Activated T-helper 1 cell treated with anti-CD3 and anti-CD28 coated beads, Interleukin-12 subunit alpha, Interleukin-12 subunit beta, Interleukin-2, Interleukin-4 antibody, amounts not matched to agents 30 ng/mL and 10 ng/mL and 1 ng/mL, durations not matched to agents 14 hours and 24 hours and 36 hours (primary cell): ENCODE measurements at regions of chr19 and their contacts with region 1.

Region 1: GRCh38 chr19:43619262-43620060 is at the start of gene ZNF428:
- DNase-seq: peak; percentile 86
- H3K4me3 Mint-ChIP-seq: peak within 1 kb of the TSS; percentile 98
- H3K27ac Mint-ChIP-seq: peak within 1 kb of the TSS; percentile 99
- H3K4me1 Mint-ChIP-seq: peaks cover 23% of the 10 kb centered on the region
- H3K27me3 Mint-ChIP-seq: no peaks in the 10 kb centered on the region
- total RNA-seq, gene ZNF428: 17.9 and 20.3 TPM in 2 replicates

Region 2: DNA sequence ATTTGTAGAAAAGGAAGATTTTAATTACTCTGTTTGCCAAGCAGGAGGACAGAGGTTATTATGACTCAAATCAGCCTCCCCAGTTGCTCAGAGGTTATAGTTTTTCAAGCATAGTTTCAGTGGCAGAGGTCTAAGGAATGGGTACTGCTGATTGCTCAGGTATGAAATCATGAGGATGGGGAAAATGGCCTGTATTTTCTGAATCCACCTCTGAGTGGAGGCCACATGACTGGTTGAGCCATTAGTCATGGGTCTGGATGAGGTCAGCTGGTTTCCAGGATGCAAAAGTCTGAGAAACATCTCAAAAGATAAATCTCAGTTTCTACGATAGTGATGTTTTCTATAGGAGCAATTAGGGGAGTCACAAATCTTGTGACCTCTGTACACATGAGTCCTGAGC is 961.9 kb before region 1 on chr19:
- intact Hi-C with region 1: no loop called
- DNase-seq: no peak
- H3K4me3 Mint-ChIP-seq: no peak overlapping the region
- H3K27ac Mint-ChIP-seq: no peak overlapping the region
- H3K4me1 Mint-ChIP-seq: no peaks in the 10 kb centered on the region
- H3K27me3 Mint-ChIP-seq: peaks cover 5% of the 10 kb centered on the region

Region 3: DNA sequence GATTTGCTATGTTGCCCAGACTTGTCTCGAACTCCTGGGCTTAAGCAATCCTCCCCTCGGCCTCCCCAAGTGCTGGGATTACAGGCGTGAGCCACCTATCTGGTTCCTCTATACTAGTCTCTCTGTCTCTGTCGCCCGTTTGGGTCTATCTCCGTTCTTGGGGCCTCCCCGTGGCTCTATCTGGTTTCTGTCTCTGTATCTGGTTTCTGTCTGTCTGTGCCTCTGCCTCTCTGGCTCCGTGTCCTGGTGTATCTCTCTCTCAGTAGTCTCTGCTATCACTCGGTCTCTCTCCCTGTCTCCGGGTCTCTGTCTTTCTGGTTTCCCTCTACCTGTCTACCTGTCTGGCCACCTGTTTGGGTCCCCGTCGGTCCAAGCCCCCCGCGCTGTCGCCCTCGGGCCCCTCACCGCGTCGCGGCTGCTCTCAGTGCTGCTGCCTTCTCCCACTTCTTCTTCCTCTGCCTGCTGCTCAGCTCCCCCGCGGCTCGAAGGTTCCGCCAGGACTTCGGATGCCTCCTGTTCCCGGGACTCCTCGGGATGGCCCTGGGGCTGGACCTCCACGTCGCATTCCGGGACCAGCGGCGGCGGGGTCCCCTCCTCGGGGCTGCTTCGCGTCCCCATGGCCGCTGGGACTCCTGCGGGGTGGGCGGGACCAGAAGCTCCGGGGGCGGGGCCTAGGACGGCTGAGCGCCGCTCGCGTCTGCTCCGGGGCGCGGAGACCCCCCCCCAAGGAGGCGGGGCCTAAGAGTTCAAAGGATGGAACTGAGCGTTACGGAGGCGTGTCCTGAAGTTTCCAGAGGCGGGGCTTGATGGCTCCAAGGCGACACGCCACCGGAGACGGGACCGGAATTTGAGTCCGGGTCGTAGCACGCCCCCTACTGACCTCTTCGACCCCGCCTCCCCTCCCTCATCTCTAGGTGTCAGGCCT is 115.7 kb before region 1 on chr19:
- intact Hi-C with region 1: loop called (anchors 1 kb)
- DNase-seq: peak; percentile 98
- H3K4me3 Mint-ChIP-seq: peak overlapping the region; percentile 88
- H3K27ac Mint-ChIP-seq: peak overlapping the region; percentile 82
- H3K4me1 Mint-ChIP-seq: peaks cover 18% of the 10 kb centered on the region
- H3K27me3 Mint-ChIP-seq: no peaks in the 10 kb centered on the region

Region 4: DNA sequence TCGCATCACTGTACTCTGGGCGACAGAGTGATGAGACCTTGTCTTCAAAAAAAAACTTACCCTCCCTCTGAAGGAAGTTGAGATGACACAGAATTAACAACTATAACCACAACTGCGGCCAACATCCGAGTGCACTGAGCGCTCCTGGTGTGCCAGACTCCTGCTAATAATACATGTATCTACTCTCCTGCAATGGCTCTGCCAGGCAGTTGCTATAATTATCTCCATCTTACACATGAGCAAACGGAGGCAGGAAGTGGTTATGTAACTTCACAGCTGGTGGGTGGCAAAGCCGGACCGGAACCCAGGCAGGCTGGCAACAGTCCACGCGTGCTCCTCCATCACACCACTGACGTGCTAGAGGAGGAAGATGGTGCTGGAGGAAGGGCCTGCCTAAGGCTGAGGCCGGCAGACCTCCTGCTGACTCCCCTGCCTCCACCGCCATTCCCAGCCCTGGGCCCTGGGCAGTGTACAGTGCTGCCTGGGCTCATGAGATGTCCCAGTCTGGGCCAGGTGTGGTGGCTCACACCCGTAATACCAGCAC is 56.7 kb before region 1 on chr19:
- intact Hi-C with region 1: loop called (anchors 1 kb)
- DNase-seq: peak; percentile 54
- H3K4me3 Mint-ChIP-seq: peak overlapping the region; percentile 37
- H3K27ac Mint-ChIP-seq: peak overlapping the region; percentile 74
- H3K4me1 Mint-ChIP-seq: peaks cover 32% of the 10 kb centered on the region
- H3K27me3 Mint-ChIP-seq: no peaks in the 10 kb centered on the region

Region 5: DNA sequence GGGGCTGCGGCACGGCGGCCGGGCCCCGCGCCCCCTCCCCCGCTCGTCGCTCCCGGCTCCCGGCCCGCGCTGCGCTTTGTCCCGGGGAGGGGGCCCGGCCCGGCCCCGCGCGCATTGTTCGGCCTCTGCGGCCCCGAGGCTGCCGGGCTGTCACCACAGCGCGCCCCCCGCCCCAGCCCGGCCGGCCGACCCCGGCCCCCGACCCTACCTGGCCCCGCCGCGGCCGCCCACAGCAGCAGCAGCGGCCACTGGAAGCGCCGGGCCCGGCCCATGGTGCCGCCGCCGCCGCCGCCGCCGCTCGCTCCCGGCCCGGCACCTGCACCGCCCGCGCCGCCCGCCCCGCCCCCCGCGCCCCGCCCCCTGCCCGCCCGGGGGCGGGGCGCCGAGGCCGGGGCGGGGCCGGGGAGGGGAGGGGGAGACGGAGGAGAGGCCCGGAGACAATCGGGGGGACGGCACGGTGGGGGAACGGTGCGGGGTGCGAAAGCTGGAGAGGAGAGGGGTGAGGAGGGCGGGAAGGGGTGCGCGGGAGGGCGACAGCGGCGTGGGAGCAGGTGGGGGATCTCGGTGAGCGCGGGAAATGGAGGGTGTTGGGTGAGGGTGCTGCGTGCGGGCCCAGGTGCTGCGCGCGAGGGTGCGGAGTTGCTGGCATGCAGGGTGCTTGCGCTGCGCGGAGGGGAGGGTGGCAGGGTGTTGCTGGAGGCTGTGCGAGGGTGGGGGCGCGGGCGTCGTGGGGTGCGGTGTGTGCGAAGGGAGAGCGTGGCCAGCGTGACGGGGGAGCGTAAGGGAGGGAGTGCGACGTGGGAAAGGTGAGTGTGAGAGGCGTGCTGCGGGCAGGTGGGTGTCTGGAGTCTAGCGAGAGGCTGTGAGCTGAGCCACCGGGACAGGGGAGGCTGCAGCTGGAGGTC is 20.3 kb after region 1 on chr19 and contains the start of gene CADM4:
- intact Hi-C with region 1: loop called (anchors 1 kb)
- DNase-seq: peak; percentile 30
- H3K4me3 Mint-ChIP-seq: peak within 1 kb of the TSS; percentile 80
- H3K27ac Mint-ChIP-seq: peak within 1 kb of the TSS; percentile 46
- H3K4me1 Mint-ChIP-seq: no peaks in the 10 kb centered on the region
- H3K27me3 Mint-ChIP-seq: peaks cover 41% of the 10 kb centered on the region
- total RNA-seq, gene CADM4: 0.32 and 0.39 TPM in 2 replicates

Region 6: DNA sequence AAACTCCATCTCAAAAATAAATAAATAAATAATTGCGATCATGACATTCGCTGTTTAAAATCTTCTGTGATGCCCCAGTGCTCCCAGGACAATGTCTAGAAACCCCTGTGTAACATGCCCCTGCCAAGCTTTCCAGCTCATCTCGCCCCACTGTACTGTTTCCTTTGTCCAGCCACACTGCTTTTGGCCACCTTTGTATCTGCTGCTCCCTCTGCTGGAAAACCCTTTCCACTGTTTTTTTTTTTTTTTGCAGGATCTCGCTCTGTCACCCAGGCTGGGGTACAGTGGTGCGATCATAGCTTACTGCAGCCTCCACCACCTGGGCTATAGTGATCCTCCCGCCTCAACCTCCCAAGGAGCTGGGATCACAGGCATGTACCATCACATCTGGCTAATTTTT is 43.0 kb after region 1 on chr19:
- intact Hi-C with region 1: no loop called
- DNase-seq: no peak
- H3K4me3 Mint-ChIP-seq: no peak overlapping the region
- H3K27ac Mint-ChIP-seq: no peak overlapping the region
- H3K4me1 Mint-ChIP-seq: peaks cover 27% of the 10 kb centered on the region
- H3K27me3 Mint-ChIP-seq: no peaks in the 10 kb centered on the region

Region 7: DNA sequence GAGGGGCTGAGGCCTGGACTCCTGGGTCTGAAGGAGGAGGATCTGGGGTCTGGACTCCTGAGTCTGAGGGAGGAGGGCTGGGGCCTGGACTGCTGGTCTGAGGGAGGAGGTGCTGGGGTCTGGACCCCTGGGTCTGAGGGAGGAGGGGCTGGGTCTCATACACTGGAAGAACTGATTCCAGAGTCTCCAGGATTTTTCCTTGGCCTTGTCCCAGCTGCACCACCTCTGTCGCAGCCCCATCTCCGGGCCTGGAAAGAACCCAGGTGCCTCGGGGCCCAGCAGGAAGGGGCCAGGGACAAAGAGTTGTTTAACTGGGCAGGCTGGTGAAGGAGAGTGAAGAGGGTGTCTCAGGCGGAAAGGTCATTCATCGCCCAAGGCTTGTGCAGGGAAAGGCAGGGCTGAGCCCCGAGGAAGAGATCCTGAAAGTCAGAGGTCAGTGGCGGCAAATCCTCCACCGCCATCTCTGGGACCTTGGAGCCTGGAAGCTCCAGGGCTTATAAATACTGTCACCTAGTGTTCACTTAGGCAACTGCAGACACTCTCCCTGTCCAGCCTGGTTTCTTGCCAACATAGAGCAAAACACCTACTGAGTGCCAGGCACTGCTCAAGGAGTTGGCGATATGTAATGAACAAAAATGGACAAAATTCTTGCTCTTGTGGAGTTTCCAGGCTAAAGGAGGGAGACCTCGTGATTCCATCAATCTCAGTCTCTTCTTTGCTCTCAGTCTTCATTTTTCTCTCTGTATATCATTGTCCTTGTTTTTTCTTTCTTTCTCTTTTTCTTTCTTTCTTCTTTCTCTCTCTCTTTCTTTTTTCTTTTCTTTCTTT is 165.7 kb after region 1 on chr19:
- intact Hi-C with region 1: loop called (anchors 1 kb)
- DNase-seq: peak; percentile 51
- H3K4me3 Mint-ChIP-seq: peak overlapping the region; percentile 66
- H3K27ac Mint-ChIP-seq: peak overlapping the region; percentile 92
- H3K4me1 Mint-ChIP-seq: peaks cover 41% of the 10 kb centered on the region
- H3K27me3 Mint-ChIP-seq: no peaks in the 10 kb centered on the region